Astrocyte of the cerebellum (primary cell): ENCODE measurements at regions of chr2 and their contacts with region 1.

Region 1: GRCh38 chr2:9308186-9308955 is 101.8 kb downstream of the ASAP2 start:
- DNase-seq: no peak
- H3K4me3 ChIP-seq: no peak overlapping the region
- CTCF ChIP-seq: no peak

Region 2: GRCh38 chr2:9234680-9235387 is 73.5 kb before region 1 on chr2:
- in situ Hi-C with region 1: loop called (anchors 5 kb)
- DNase-seq: peak; percentile 68
- H3K4me3 ChIP-seq: no peak overlapping the region
- CTCF ChIP-seq: no peak